H1 (cell line): ENCODE measurements at regions of chr9 and their contacts with region 1.

Region 1: DNA sequence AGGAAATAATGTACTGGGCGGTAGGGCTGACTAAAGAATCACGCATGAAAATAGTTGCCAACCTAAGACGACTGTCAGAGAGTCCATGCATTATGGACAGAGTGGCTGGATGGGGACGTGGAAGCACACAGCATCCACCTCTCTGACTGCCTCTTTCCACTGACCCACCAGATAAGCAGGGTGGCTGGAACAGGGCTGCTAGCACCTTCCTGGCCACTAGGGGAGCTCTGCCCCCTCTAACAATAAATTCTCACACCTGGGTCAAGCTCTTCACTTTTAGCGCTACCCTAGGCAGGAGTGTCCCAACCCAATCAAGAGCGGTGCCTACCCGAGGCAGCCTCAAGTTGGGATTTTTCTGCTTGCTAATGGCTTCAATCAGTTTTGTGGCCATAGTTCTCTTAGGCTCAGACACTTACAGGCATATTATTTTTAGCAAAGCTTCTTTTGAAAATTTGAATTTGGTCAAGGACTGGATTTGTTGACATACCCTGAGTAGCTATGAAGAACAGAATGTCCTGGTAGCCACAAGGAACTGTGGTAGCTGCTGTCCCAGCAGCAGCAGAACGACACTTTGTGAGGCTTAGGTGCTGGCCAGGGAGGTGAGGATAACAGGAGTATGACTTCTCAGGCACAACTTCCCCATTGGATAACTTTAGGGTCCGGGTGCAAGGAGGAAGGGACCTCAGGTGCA is 6.9 kb upstream of the TPM2 start:
- DNase-seq: peak in 1 of 2 experiments; percentile 84
- H3K4me3 ChIP-seq: no peak overlapping the region
- H3K27ac ChIP-seq: no peak overlapping the region
- H3K4me1 ChIP-seq: no peaks in the 10 kb centered on the region
- H3K27me3 ChIP-seq: no peaks in the 10 kb centered on the region
- CTCF ChIP-seq: peak; percentile 85 to 97 (median 95)
- EP300 ChIP-seq: no peak
- POLR2A ChIP-seq: no peak
- RAD21 ChIP-seq: peak; percentile 65 to 70

Region 2: DNA sequence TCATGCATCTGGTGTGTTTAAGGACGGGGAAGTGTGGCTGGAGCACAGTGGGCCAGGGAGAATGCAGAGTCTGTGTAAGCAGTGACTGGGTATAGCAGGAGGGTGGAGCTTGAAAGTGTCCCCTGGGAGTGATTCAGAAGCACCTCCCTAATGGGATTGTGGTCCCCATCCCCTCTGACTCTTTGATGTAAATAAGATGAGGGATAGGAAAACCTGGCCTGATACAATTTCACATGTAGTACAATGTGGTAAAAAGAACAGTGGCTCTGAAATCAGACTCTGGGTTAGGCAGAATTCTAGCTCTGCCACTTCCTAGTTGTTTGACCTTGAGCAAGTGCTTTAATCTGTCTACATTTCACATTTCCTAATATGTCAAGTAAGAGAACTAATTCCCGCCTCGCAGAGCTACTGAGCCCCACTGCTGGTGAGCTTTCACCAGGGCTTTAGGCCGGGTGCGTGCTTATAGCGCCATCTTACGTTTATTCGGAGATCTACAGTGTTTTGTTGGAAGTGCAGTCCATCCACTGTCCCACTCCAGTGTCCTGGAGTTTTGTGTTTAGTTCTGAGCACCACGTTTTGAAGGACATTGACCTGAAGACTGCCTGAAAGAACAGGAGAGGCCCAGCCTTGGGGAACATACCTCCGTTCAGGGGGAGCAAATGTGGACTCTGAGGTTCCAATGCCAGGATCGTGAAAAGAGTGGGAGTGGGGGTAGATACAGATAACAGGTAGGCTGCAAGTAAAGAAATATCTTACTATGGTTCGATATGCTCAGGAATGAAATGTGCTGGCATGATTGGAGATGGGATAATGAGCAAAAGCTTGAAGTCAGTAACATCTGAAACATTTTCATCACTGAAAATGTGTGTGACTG is 142.8 kb before region 1 on chr9:
- CTCF ChIA-PET with region 1: no interaction called
- POLR2A ChIA-PET with region 1: no interaction called
- DNase-seq: peak in 1 of 2 experiments; percentile 72
- H3K4me3 ChIP-seq: no peak overlapping the region
- H3K27ac ChIP-seq: no peak overlapping the region
- H3K4me1 ChIP-seq: peaks cover 0 to 4% (median 0%) of the 10 kb centered on the region in 4 experiments; a peak in 2 of 7 replicates
- H3K27me3 ChIP-seq: no peaks in the 10 kb centered on the region
- CTCF ChIP-seq: peak; percentile 68 to 97 (median 92)
- EP300 ChIP-seq: no peak
- POLR2A ChIP-seq: no peak
- RAD21 ChIP-seq: peak; percentile 99 to 100

Region 3: GRCh38 chr9:35603987-35604577 is 92.6 kb before region 1 on chr9:
- CTCF ChIA-PET with region 1: interaction called, 33 read pairs
- POLR2A ChIA-PET with region 1: no interaction called
- DNase-seq: peak; percentile 98 to 100
- H3K4me3 ChIP-seq: peak overlapping the region; percentile 55 to 76 (median 66)
- H3K27ac ChIP-seq: no peak overlapping the region
- H3K4me1 ChIP-seq: peaks cover 0 to 15% (median 9%) of the 10 kb centered on the region in 4 experiments; a peak in 6 of 7 replicates
- H3K27me3 ChIP-seq: no peaks in the 10 kb centered on the region
- CTCF ChIP-seq: peak; percentile 77 to 86 (median 84)
- EP300 ChIP-seq: no peak; a peak in 1 of 3 replicates
- POLR2A ChIP-seq: peak in 1 of 2 experiments; percentile 60; a peak in 2 of 3 replicates
- RAD21 ChIP-seq: peak; percentile 55 to 70

Region 4: GRCh38 chr9:35616681-35617459 is 79.8 kb before region 1 on chr9:
- CTCF ChIA-PET with region 1: interaction called, 33 read pairs
- POLR2A ChIA-PET with region 1: interaction called, 4 read pairs
- DNase-seq: peak in 1 of 2 experiments; percentile 82
- H3K4me3 ChIP-seq: peak overlapping the region; percentile 44 to 69 (median 50)
- H3K27ac ChIP-seq: no peak overlapping the region
- H3K4me1 ChIP-seq: peaks cover 0 to 9% (median 5%) of the 10 kb centered on the region in 4 experiments; a peak in 4 of 7 replicates
- H3K27me3 ChIP-seq: peaks cover 0 to 18% (median 14%) of the 10 kb centered on the region in 4 experiments; a peak in 4 of 7 replicates
- CTCF ChIP-seq: peak in 2 of 3 experiments; percentile 18 to 33; a peak in 3 of 4 replicates
- EP300 ChIP-seq: no peak
- POLR2A ChIP-seq: peak in 1 of 2 experiments; percentile 78; a peak in 2 of 3 replicates
- RAD21 ChIP-seq: no peak; a peak in 1 of 4 replicates

Region 5: GRCh38 chr9:35657546-35658136 is 39.0 kb before region 1 on chr9 and contains the start of gene RMRP:
- CTCF ChIA-PET with region 1: interaction called, 347 read pairs
- POLR2A ChIA-PET with region 1: interaction called, 84 read pairs
- DNase-seq: peak; percentile 96 to 98
- H3K4me3 ChIP-seq: peak within 1 kb of the TSS; percentile 70 to 92 (median 86)
- H3K27ac ChIP-seq: peak within 1 kb of the TSS; percentile 99
- H3K4me1 ChIP-seq: peaks cover 0 to 2% (median 0%) of the 10 kb centered on the region in 4 experiments; a peak in 4 of 7 replicates
- H3K27me3 ChIP-seq: peaks cover 0 to 7% (median 0%) of the 10 kb centered on the region in 4 experiments; a peak in 1 of 7 replicates
- CTCF ChIP-seq: peak in 2 of 3 experiments; percentile 4 to 8; a peak in 1 of 4 replicates
- EP300 ChIP-seq: peak in 1 of 2 experiments; percentile 91; a peak in 1 of 3 replicates
- POLR2A ChIP-seq: peak in 1 of 2 experiments; percentile 32; a peak in 2 of 3 replicates
- RAD21 ChIP-seq: peak in 1 of 2 experiments; percentile 7; a peak in 2 of 4 replicates
- total RNA-seq, gene RMRP: 14,987 and 16,528 TPM in 2 replicates

Region 6: GRCh38 chr9:35675732-35676392 is 20.8 kb before region 1 on chr9:
- CTCF ChIA-PET with region 1: interaction called, 77 read pairs
- POLR2A ChIA-PET with region 1: interaction called, 63 read pairs
- DNase-seq: peak in 1 of 2 experiments; percentile 98
- H3K4me3 ChIP-seq: peak overlapping the region; percentile 55 to 69 (median 60)
- H3K27ac ChIP-seq: no peak overlapping the region
- H3K4me1 ChIP-seq: peaks cover 0 to 15% (median 3%) of the 10 kb centered on the region in 4 experiments; a peak in 5 of 7 replicates
- H3K27me3 ChIP-seq: peaks cover 0 to 3% (median 3%) of the 10 kb centered on the region in 4 experiments; a peak in 4 of 7 replicates
- CTCF ChIP-seq: no peak
- EP300 ChIP-seq: no peak
- POLR2A ChIP-seq: peak; percentile 43 to 55; a peak in 2 of 3 replicates
- RAD21 ChIP-seq: no peak

Region 7: GRCh38 chr9:35716230-35716629 is 19.6 kb after region 1 on chr9:
- CTCF ChIA-PET with region 1: interaction called, 199 read pairs
- POLR2A ChIA-PET with region 1: interaction called, 11 read pairs
- DNase-seq: no peak
- H3K4me3 ChIP-seq: no peak overlapping the region
- H3K27ac ChIP-seq: no peak overlapping the region
- H3K4me1 ChIP-seq: no peaks in the 10 kb centered on the region
- H3K27me3 ChIP-seq: no peaks in the 10 kb centered on the region
- CTCF ChIP-seq: peak in 1 of 3 experiments; percentile 4; a peak in 1 of 4 replicates
- EP300 ChIP-seq: no peak
- POLR2A ChIP-seq: no peak
- RAD21 ChIP-seq: no peak

Region 8: GRCh38 chr9:35972093-35972492 is 275.4 kb after region 1 on chr9:
- CTCF ChIA-PET with region 1: no interaction called
- POLR2A ChIA-PET with region 1: no interaction called
- DNase-seq: peak in 1 of 2 experiments; percentile 75
- H3K4me3 ChIP-seq: peak overlapping the region; percentile 1 to 53 (median 7); a peak in 6 of 8 replicates
- H3K27ac ChIP-seq: no peak overlapping the region
- H3K4me1 ChIP-seq: no peaks in the 10 kb centered on the region
- H3K27me3 ChIP-seq: peaks cover 0 to 2% (median under 1%) of the 10 kb centered on the region in 4 experiments; a peak in 3 of 7 replicates
- CTCF ChIP-seq: no peak; a peak in 1 of 4 replicates
- EP300 ChIP-seq: no peak
- POLR2A ChIP-seq: no peak
- RAD21 ChIP-seq: no peak